ENCODE measurements at regions of chr4 and their contacts with region 1.

Region 1: GRCh38 chr4:108072300-108072699 is 82.6 kb downstream of the HADH start:
- DNase-seq: peak; percentile 37 to 93 (median 77)
- ATAC-seq: peak; percentile 87
- H3K4me3 ChIP-seq: peak overlapping the region in 1 of 2 experiments; percentile 20
- H3K4me3 Mint-ChIP-seq: peak overlapping the region; percentile 60
- H3K27ac ChIP-seq: peak overlapping the region; percentile 67 to 76
- H3K27ac Mint-ChIP-seq: peak overlapping the region; percentile 97
- H3K4me1 ChIP-seq: peaks cover 58% of the 10 kb centered on the region
- H3K4me1 Mint-ChIP-seq: peaks cover 74% of the 10 kb centered on the region
- H3K27me3 ChIP-seq: no peaks in the 10 kb centered on the region
- H3K27me3 Mint-ChIP-seq: no peaks in the 10 kb centered on the region
- CTCF ChIP-seq: no peak

Region 2: DNA sequence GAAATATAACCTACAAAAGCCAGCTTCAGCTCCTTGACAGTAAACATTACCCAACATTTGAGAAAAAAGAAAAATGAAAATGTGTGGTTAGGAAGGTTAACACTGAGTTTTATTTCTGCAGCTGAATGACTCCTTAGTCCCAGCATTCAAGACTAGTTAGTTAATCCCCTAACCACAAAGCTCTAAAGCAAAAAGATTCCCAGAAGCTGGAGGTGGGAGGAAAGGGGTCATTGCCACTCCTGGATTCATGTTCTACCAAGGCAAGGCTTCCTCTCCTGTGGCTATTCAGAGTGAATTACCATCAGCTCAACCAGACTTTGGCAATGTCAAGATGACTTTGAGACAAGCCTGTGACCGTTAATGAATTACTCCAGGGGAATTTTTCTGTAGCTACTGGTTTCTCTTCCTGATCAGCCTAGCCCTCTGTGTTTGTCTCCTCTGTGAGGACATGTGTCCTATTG is 19.0 kb before region 1 on chr4:
- CTCF ChIA-PET with region 1: no interaction called
- POLR2A ChIA-PET with region 1: interaction called, 5 read pairs
- intact Hi-C with region 1: loop called in 1 of 2 experiments (anchors 2 kb)
- DNase-seq: no peak
- ATAC-seq: no peak
- H3K4me3 ChIP-seq: no peak overlapping the region
- H3K4me3 Mint-ChIP-seq: peak overlapping the region; percentile 49
- H3K27ac ChIP-seq: peak overlapping the region; percentile 1 to 35
- H3K27ac Mint-ChIP-seq: peak overlapping the region; percentile 95
- H3K4me1 ChIP-seq: peaks cover 96% of the 10 kb centered on the region
- H3K4me1 Mint-ChIP-seq: peaks cover 91% of the 10 kb centered on the region
- H3K27me3 ChIP-seq: no peaks in the 10 kb centered on the region
- H3K27me3 Mint-ChIP-seq: no peaks in the 10 kb centered on the region
- CTCF ChIP-seq: no peak

Region 3: GRCh38 chr4:108060164-108060563 is 12.1 kb before region 1 on chr4:
- CTCF ChIA-PET with region 1: interaction called, 5 read pairs
- POLR2A ChIA-PET with region 1: interaction called, 5 read pairs
- intact Hi-C with region 1: loop called in 1 of 2 experiments (anchors 1 kb)
- DNase-seq: peak in 2 of 9 experiments; percentile 33 to 51
- ATAC-seq: no peak
- H3K4me3 ChIP-seq: no peak overlapping the region
- H3K4me3 Mint-ChIP-seq: no peak overlapping the region
- H3K27ac ChIP-seq: no peak overlapping the region
- H3K27ac Mint-ChIP-seq: peak overlapping the region; percentile 81
- H3K4me1 ChIP-seq: peaks cover 92% of the 10 kb centered on the region
- H3K4me1 Mint-ChIP-seq: peaks cover 87% of the 10 kb centered on the region
- H3K27me3 ChIP-seq: no peaks in the 10 kb centered on the region
- H3K27me3 Mint-ChIP-seq: no peaks in the 10 kb centered on the region
- CTCF ChIP-seq: no peak